Adrenal gland (tissue), 19 donors: ENCODE measurements at regions of chr3 and their contacts with region 1.

Region 1: DNA sequence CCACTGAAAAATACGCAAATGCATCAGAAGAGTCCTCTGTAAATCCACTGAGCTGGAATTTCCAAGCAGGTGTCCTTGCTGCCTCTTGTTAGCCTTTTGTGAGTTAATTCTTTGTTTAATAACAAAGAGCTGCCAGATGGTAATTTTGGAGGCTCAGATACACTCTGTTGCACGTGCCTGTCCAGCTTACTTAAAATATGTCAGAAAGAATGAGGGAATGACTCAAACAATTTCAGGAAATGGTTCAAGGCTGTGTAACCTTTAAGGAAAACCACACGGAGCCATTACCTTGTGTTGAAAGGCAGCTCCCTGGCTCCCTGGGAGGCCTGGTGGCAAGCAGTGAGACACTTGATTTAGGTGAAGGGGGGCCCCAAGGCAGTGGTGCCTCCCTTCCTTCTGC is 302.2 kb upstream of the CTDSPL start:
- DNase-seq: peak in 4 of 7 donors; percentile 34 to 66 (median 57)
- H3K4me3 ChIP-seq: no peak overlapping the region
- H3K27ac ChIP-seq: peak overlapping the region in 4 of 5 donors; percentile 26 to 74 (median 64)
- H3K4me1 ChIP-seq: peaks cover 6 to 27% of the 10 kb centered on the region in 2 donors
- H3K27me3 ChIP-seq: no peaks in the 10 kb centered on the region
- CTCF ChIP-seq: no peak
- POLR2A ChIP-seq: no peak

Region 2: GRCh38 chr3:37741644-37742043 is 182.2 kb after region 1 on chr3:
- intact Hi-C with region 1: loop called in 1 of 2 experiments (anchors 10 kb)
- DNase-seq: peak; percentile 70 to 90 (median 80)
- H3K4me3 ChIP-seq: no peak overlapping the region
- H3K27ac ChIP-seq: peak overlapping the region in 1 of 5 donors; percentile 50
- H3K4me1 ChIP-seq: peaks cover 15 to 28% of the 10 kb centered on the region in 2 donors
- H3K27me3 ChIP-seq: no peaks in the 10 kb centered on the region
- CTCF ChIP-seq: peak in 5 of 6 experiments; percentile 57 to 72 (median 67)
- POLR2A ChIP-seq: no peak